Dorsolateral prefrontal cortex (tissue), 120 donors: ENCODE measurements at regions of chrX and their contacts with region 1.

Region 1: GRCh38 chrX:23901805-23902204 is 5.9 kb downstream of the APOO start:
- DNase-seq: peak in 1 of 10 donors; percentile 38
- H3K4me3 ChIP-seq: peak overlapping the region in 30 of 59 donors; percentile 1 to 50 (median 28)
- H3K27ac ChIP-seq: peak overlapping the region in 47 of 59 donors; percentile 1 to 79 (median 55)
- H3K27me3 ChIP-seq: peaks cover 0 to 38% (median under 1%) of the 10 kb centered on the region in 45 donors
- CTCF ChIP-seq: peak in 52 of 56 donors; percentile 22 to 67 (median 47)

Region 2: DNA sequence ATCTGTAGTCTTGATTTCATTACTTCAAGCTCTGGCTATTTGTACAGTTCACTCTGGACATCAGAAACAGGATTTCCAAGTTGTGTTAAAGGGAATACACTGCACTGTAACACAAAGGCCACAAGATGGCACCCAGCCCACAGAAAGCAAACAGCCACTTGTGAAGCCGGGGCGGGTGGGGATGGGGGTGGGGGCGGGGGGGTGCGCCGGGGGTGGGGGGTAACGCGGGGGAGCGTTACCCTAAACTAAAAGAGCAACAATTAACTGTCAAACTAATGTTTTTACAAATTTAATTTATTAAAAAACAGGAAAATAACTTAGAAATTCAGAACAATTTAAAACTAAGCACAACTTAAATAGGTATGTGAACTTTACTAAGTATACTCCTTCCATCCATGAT is 207.2 kb before region 1 on chrX:
- intact Hi-C with region 1: loop called (anchors 2 to 5 kb)
- DNase-seq: peak in 9 of 10 donors; percentile 30 to 68 (median 52)
- H3K4me3 ChIP-seq: no peak overlapping the region
- H3K27ac ChIP-seq: no peak overlapping the region
- H3K27me3 ChIP-seq: peaks cover 0 to 64% (median 7%) of the 10 kb centered on the region in 45 donors
- CTCF ChIP-seq: peak in 51 of 56 donors; percentile 13 to 71 (median 47)

Region 3: GRCh38 chrX:23756157-23756559 is 145.6 kb before region 1 on chrX:
- intact Hi-C with region 1: loop called in 1 of 2 experiments (anchors 5 kb)
- DNase-seq: peak in 3 of 10 donors; percentile 20 to 46 (median 44)
- H3K4me3 ChIP-seq: no peak overlapping the region
- H3K27ac ChIP-seq: no peak overlapping the region
- H3K27me3 ChIP-seq: peaks cover 0 to 50% (median 5%) of the 10 kb centered on the region in 45 donors
- CTCF ChIP-seq: peak; percentile 28 to 70 (median 50)

Region 4: GRCh38 chrX:23854945-23855344 is 46.9 kb before region 1 on chrX:
- intact Hi-C with region 1: no loop called
- DNase-seq: no peak
- H3K4me3 ChIP-seq: no peak overlapping the region
- H3K27ac ChIP-seq: no peak overlapping the region
- H3K27me3 ChIP-seq: peaks cover 0 to 64% (median 11%) of the 10 kb centered on the region in 45 donors
- CTCF ChIP-seq: no peak